WTC11 (cell line): ENCODE measurements at regions of chr1 and their contacts with region 1.

Region 1: GRCh38 chr1:209627732-209628196 is 24.5 kb downstream of the LAMB3 start:
- DNase-seq: peak; percentile 95
- ATAC-seq: peak; percentile 83
- H3K4me3 Mint-ChIP-seq: no peak overlapping the region
- H3K27ac Mint-ChIP-seq: no peak overlapping the region
- H3K4me1 Mint-ChIP-seq: peaks cover 43% of the 10 kb centered on the region
- H3K27me3 Mint-ChIP-seq: peaks cover 3% of the 10 kb centered on the region; the same call in 1 of the 2 replicates
- CTCF ChIP-seq: peak; percentile 98

Region 2: DNA sequence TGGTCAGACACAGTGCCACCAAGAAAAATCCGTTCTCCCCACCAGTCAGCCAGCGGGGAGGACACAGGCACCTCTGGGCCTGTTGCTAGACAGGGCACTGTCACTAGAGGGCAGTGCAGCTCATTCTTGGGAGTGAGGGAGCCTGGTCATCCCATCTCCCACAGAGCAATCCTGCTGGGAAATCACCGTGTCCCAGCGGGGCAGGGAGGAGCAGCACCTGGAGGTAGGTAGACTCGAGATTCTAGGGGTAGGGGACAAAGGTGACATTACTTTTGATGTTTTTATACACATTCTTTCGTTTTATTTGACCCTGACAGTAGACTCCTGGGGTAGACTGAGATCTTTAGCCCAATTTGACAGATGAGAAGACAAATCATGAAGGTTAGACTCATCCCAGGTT is 51.0 kb before region 1 on chr1:
- CTCF ChIA-PET with region 1: interaction called, 50 read pairs
- POLR2A ChIA-PET with region 1: interaction called, 3 read pairs
- DNase-seq: peak; percentile 90
- ATAC-seq: peak; percentile 98
- H3K4me3 Mint-ChIP-seq: no peak overlapping the region
- H3K27ac Mint-ChIP-seq: no peak overlapping the region
- H3K4me1 Mint-ChIP-seq: peaks cover 10% of the 10 kb centered on the region
- H3K27me3 Mint-ChIP-seq: peaks cover 2% of the 10 kb centered on the region; the same call in 1 of the 2 replicates
- CTCF ChIP-seq: peak; percentile 93

Region 3: DNA sequence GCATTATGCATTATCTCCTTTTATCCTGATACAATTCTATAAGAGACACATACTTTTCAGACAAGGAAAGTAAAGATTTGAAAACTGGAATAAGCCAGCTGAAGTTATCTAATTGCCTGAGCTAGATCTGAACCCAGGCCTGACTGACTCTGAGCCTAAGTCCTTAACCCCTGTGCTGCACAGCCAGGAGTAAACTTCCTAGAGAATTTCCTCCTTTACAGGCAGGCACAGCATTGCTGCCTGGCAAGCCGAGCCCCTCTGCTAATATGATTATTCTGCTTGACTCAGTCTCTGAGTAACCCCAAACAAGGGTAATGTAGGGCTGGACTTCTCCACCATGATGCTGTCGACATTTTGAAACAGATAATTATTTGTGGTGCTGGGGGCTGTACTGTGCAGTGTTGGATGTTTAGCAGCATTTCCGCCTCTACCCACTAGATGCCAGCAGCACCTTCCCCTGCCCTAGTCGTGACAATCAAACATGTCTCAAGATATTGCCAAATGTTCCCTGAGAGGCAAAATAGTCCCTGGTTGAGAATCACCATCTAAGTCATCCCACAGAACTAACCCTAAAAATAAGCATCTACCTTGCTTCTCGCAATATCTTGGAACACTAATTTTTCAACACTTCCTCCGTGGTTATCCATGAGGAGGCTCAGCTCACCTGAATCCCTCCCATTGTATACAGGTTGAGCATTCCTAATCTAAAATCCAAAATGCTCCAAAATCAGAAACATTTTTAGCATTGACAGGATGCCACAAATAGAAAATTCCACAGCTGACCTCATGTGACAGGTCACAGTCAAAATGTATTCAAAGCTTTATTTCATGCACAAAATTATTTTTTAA is 25.7 kb before region 1 on chr1:
- CTCF ChIA-PET with region 1: interaction called, 17 read pairs
- POLR2A ChIA-PET with region 1: no interaction called
- DNase-seq: peak; percentile 37
- ATAC-seq: peak; percentile 97
- H3K4me3 Mint-ChIP-seq: no peak overlapping the region
- H3K27ac Mint-ChIP-seq: no peak overlapping the region
- H3K4me1 Mint-ChIP-seq: no peaks in the 10 kb centered on the region
- H3K27me3 Mint-ChIP-seq: no peaks in the 10 kb centered on the region
- CTCF ChIP-seq: peak; percentile 14; the same call in 1 of the 2 replicates

Region 4: GRCh38 chr1:209641832-209642172 is 14.0 kb after region 1 on chr1:
- CTCF ChIA-PET with region 1: interaction called, 12 read pairs
- POLR2A ChIA-PET with region 1: interaction called, 4 read pairs
- DNase-seq: no peak
- ATAC-seq: peak; percentile 34
- H3K4me3 Mint-ChIP-seq: no peak overlapping the region
- H3K27ac Mint-ChIP-seq: no peak overlapping the region
- H3K4me1 Mint-ChIP-seq: peaks cover 4% of the 10 kb centered on the region
- H3K27me3 Mint-ChIP-seq: no peaks in the 10 kb centered on the region
- CTCF ChIP-seq: no peak

Region 5: DNA sequence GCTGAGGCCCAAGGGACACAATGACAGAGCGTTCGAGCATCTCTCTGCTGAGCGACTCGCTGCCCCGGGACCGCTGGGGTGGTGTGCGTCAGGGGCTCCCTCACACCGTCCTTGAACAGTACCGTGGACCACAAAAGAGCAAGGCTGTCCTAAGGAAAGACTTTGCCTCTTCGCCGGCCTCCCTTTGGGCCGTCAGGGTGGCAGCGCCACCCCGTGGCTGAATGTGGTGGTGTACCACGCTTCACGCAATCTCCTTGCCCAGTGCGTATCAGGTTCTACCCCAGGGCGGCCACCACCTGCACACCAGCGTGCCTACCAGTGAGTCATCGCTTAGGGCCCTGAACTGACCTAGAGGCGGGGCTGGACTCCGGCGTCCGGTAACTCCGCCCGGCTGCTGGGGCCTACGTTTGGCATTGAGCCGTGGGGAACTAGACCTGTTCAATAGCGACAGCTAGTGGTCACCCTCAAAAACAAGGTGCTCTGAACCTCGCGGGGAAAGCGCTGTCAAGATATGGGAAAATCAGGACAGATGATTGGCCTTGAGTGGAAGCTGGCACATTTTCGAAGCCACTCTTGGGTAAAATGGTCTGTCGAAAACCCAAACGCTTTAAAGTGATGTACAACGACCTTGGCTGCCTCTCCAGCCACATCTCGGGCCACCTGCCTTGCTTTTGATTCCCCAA is 120.0 kb after region 1 on chr1:
- CTCF ChIA-PET with region 1: interaction called, 12 read pairs
- POLR2A ChIA-PET with region 1: no interaction called
- DNase-seq: peak; percentile 99
- ATAC-seq: peak; percentile 99
- H3K4me3 Mint-ChIP-seq: peak overlapping the region; percentile 51
- H3K27ac Mint-ChIP-seq: no peak overlapping the region
- H3K4me1 Mint-ChIP-seq: peaks cover 10% of the 10 kb centered on the region
- H3K27me3 Mint-ChIP-seq: peaks cover 23% of the 10 kb centered on the region
- CTCF ChIP-seq: peak; percentile 96